IMR-90 (cell line): ENCODE measurements at regions of chr11 and their contacts with region 1.

Region 1: GRCh38 chr11:122202951-122203456 is 87.0 kb upstream of the BLID start:
- DNase-seq: peak; percentile 71
- ATAC-seq: peak; percentile 73
- H3K4me3 ChIP-seq: peak overlapping the region; percentile 54
- H3K27ac ChIP-seq: peak overlapping the region; percentile 98
- H3K4me1 ChIP-seq: peaks cover 40% of the 10 kb centered on the region
- H3K27me3 ChIP-seq: no peaks in the 10 kb centered on the region
- CTCF ChIP-seq: peak; percentile 95
- POLR2A ChIP-seq: 0 out of 2 replicates have a peak, but pooled peaks have one; percentile 40
- RAD21 ChIP-seq: peak; percentile 95

Region 2: GRCh38 chr11:121464352-121464946 is 738.6 kb before region 1 on chr11:
- CTCF ChIA-PET with region 1: no interaction called
- POLR2A ChIA-PET with region 1: no interaction called
- dilution Hi-C with region 1: no loop called
- in situ Hi-C with region 1: no loop called
- intact Hi-C with region 1: loop called (anchors 10 kb)
- DNase-seq: peak; percentile 94
- ATAC-seq: peak; percentile 81
- H3K4me3 ChIP-seq: no peak overlapping the region
- H3K27ac ChIP-seq: peak overlapping the region; percentile 4; the same call in 1 of the 2 replicates
- H3K4me1 ChIP-seq: peaks cover 17% of the 10 kb centered on the region
- H3K27me3 ChIP-seq: peaks cover 2% of the 10 kb centered on the region; the same call in 1 of the 2 replicates
- CTCF ChIP-seq: no peak
- POLR2A ChIP-seq: no peak
- RAD21 ChIP-seq: no peak

Region 3: DNA sequence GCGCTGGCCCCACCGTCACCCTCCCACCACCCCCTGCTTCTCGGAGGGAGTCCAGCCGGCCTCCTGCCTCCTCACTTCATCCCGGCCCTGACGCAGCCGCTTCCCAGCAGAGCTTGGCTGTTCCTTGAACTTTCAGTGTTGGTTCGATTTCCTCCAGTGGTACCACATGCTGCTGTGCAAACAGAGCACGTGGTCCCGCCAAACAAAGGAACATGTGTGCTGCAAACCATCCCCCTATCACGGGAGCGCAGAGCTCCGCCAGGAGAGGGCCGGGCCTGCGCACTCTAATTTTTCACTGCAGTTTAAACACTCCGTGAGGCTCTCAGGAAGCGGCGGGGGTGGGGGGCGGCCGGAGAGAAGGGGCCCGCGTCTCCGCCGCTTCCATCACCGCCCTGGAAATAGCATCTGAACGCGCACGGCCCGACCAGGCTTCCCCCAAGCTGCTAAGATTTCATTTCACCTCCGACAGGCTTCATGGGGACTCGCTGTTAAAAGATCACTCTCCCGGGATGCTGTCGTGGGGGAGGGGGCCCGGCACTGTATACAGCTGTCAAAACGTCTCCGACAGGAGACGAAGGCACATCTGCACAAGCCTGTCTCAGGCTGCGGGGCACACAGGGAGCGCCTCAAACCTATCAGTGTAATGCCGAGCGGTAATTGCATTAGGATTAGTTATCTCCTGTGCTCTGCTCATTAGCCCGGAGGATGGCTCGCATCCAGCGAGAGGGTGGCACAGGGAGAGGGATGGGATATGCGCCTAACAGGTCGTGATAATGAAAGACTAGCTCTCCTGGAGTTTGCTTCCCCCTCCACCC is 480.4 kb before region 1 on chr11:
- CTCF ChIA-PET with region 1: no interaction called
- POLR2A ChIA-PET with region 1: no interaction called
- dilution Hi-C with region 1: no loop called
- in situ Hi-C with region 1: no loop called
- intact Hi-C with region 1: no loop called
- DNase-seq: peak; percentile 89
- ATAC-seq: peak; percentile 92
- H3K4me3 ChIP-seq: peak overlapping the region; percentile 45
- H3K27ac ChIP-seq: peak overlapping the region; percentile 61
- H3K4me1 ChIP-seq: peaks cover 8% of the 10 kb centered on the region; the same call in 1 of the 2 replicates
- H3K27me3 ChIP-seq: no peaks in the 10 kb centered on the region
- CTCF ChIP-seq: no peak
- POLR2A ChIP-seq: no peak
- RAD21 ChIP-seq: no peak

Region 4: GRCh38 chr11:122038543-122038942 is 164.5 kb before region 1 on chr11:
- CTCF ChIA-PET with region 1: no interaction called
- POLR2A ChIA-PET with region 1: no interaction called
- dilution Hi-C with region 1: no loop called
- in situ Hi-C with region 1: no loop called
- intact Hi-C with region 1: loop called (anchors 10 kb)
- DNase-seq: peak; percentile 93
- ATAC-seq: peak; percentile 82
- H3K4me3 ChIP-seq: no peak overlapping the region
- H3K27ac ChIP-seq: peak overlapping the region; percentile 36; the same call in 1 of the 2 replicates
- H3K4me1 ChIP-seq: peaks cover 23% of the 10 kb centered on the region
- H3K27me3 ChIP-seq: no peaks in the 10 kb centered on the region
- CTCF ChIP-seq: no peak
- POLR2A ChIP-seq: no peak
- RAD21 ChIP-seq: no peak

Region 5: DNA sequence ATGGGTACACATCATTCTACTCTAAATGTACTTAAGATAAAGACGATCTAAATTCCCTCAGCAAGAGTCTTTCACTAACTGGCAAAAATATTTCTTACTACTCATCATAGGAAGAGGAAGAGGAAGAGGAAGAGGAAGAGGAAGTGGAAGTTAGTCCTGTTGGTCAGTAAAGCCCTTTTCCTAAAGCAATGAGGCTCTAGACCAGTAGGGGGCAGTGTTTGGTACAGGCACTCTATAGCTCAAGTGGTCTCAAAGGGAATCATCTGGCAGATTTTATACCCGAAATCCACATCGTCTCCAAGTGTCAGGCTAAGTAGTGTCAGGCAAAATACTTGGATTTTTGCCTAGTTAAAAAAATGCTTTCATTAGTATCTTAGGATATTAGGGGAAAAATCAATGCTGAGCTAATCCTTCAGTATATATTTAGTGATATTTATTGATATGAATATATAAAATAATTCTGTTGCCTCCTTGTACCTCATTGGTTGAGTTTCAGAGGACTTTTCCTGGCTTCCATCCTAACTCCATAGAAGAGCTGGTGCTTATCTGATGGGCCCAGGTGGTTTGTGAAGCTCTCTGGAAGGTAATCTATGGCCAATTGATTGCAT is 94.7 kb before region 1 on chr11:
- CTCF ChIA-PET with region 1: no interaction called
- POLR2A ChIA-PET with region 1: no interaction called
- dilution Hi-C with region 1: no loop called
- in situ Hi-C with region 1: loop called (anchors 10 kb)
- intact Hi-C with region 1: no loop called
- DNase-seq: peak; percentile 70
- ATAC-seq: no peak
- H3K4me3 ChIP-seq: no peak overlapping the region
- H3K27ac ChIP-seq: no peak overlapping the region
- H3K4me1 ChIP-seq: peaks cover 25% of the 10 kb centered on the region
- H3K27me3 ChIP-seq: no peaks in the 10 kb centered on the region
- CTCF ChIP-seq: peak; percentile 62
- POLR2A ChIP-seq: no peak
- RAD21 ChIP-seq: peak; percentile 39

Region 6: DNA sequence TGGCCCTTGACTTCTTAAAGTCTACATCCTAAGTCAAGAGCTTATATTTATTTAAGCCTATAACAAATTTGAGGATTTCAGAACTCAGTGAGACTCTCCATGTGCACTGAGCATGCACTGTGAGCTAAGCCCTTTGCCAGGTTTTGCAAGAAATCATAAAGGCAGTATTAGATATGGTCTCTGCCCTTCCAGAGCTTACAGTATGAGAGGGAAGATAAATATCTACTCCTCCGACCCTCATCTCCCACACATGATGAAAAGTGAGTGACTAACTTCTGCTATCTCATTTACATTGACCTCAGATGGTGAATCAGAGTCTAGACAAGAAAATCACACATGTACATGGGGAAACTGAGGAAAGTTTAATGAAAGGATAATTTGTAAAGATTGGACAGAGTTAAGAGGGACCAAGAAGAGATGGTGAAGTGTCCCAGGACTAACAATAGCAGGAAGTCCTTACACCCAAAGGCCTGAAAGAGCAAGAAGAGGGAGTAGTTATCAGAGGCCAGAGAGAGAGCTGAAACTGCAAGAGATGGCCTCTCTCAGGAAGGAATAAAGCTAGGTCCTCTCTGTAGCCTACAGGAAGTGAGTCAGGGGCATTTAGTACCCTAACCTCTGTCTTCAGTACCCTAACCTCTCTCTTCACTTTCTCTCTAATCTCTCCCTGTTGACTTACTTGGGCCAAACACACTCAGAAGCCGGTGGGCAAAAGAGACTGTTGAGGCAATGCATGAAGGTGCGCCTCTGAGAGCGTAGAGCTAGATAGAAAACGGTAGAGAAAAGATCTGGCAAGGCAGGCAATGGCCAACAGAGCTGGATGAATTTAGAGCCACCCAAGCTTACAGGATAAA is 64.0 kb before region 1 on chr11:
- CTCF ChIA-PET with region 1: no interaction called
- POLR2A ChIA-PET with region 1: no interaction called
- dilution Hi-C with region 1: no loop called
- in situ Hi-C with region 1: no loop called
- intact Hi-C with region 1: loop called (anchors 2 kb)
- DNase-seq: peak; percentile 56
- ATAC-seq: peak; percentile 22
- H3K4me3 ChIP-seq: no peak overlapping the region
- H3K27ac ChIP-seq: peak overlapping the region; percentile 88
- H3K4me1 ChIP-seq: peaks cover 14% of the 10 kb centered on the region
- H3K27me3 ChIP-seq: no peaks in the 10 kb centered on the region
- CTCF ChIP-seq: no peak
- POLR2A ChIP-seq: no peak
- RAD21 ChIP-seq: no peak

Region 7: GRCh38 chr11:122167100-122167499 is 35.9 kb before region 1 on chr11:
- CTCF ChIA-PET with region 1: no interaction called
- POLR2A ChIA-PET with region 1: no interaction called
- dilution Hi-C with region 1: no loop called
- in situ Hi-C with region 1: no loop called
- intact Hi-C with region 1: loop called (anchors 5 kb)
- DNase-seq: peak; percentile 85
- ATAC-seq: peak; percentile 10
- H3K4me3 ChIP-seq: no peak overlapping the region
- H3K27ac ChIP-seq: peak overlapping the region; percentile 48; the same call in 1 of the 2 replicates
- H3K4me1 ChIP-seq: peaks cover 35% of the 10 kb centered on the region
- H3K27me3 ChIP-seq: no peaks in the 10 kb centered on the region
- CTCF ChIP-seq: no peak
- POLR2A ChIP-seq: no peak
- RAD21 ChIP-seq: no peak

Region 8: GRCh38 chr11:122344274-122344673 is 141.3 kb after region 1 on chr11:
- CTCF ChIA-PET with region 1: no interaction called
- POLR2A ChIA-PET with region 1: no interaction called
- dilution Hi-C with region 1: no loop called
- in situ Hi-C with region 1: no loop called
- intact Hi-C with region 1: no loop called
- DNase-seq: peak; percentile 94
- ATAC-seq: peak; percentile 65
- H3K4me3 ChIP-seq: no peak overlapping the region
- H3K27ac ChIP-seq: peak overlapping the region; percentile 56; the same call in 1 of the 2 replicates
- H3K4me1 ChIP-seq: peaks cover 20% of the 10 kb centered on the region
- H3K27me3 ChIP-seq: no peaks in the 10 kb centered on the region
- CTCF ChIP-seq: no peak
- POLR2A ChIP-seq: no peak
- RAD21 ChIP-seq: no peak